Caco-2 (cell line): ENCODE measurements at regions of chr2 and their contacts with region 1.

Region 1: DNA sequence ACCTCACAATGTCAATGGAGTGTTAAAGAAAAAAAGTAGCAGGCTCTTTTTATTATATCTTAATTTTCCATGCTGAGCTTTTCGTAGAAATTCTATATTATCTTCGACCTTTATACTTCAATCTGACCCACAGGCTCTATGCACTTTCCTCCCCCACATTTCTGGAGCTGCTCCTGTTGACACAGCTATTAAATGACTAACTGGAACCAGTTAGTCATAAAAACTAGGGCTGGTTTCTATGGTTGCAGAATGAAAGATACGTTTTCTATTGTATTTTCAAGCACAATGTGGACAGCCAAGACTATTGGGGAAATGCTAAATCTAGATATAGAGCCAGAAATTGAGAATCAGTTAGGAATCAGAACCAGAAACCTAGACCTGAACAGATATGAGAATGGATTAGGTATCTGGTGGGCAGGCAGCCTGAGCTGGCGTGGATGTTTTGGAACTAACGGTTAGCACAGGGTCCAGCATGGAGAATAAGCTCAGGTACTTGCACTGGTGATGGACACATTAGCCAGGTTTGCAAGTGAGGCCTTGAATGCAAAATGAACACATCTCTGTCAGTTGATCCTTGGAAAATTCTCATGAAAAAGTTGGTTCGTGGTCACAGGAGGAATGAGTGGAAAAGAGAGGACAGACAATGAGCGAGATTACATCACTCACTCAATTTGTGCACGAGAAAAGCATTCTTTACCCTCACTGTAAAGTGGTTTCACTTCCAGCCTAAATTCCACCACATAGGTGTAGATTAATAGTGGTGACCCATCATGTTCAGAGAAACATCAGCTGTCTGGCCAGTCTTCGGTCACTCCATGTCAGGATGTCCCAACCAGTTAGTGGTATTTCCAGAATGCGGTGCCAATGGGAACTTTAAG is 144.6 kb upstream of the EPHA4 start:
- DNase-seq: peak; percentile 71 to 82
- H3K4me3 ChIP-seq: no peak overlapping the region
- H3K4me3 Mint-ChIP-seq: peak overlapping the region; percentile 57
- H3K27ac Mint-ChIP-seq: peak overlapping the region; percentile 93
- H3K4me1 ChIP-seq: peaks cover 47% of the 10 kb centered on the region
- H3K4me1 Mint-ChIP-seq: peaks cover 55% of the 10 kb centered on the region
- H3K27me3 ChIP-seq: no peaks in the 10 kb centered on the region
- H3K27me3 Mint-ChIP-seq: no peaks in the 10 kb centered on the region
- CTCF ChIP-seq: no peak

Region 2: GRCh38 chr2:220880623-220881596 is 835.8 kb before region 1 on chr2:
- CTCF ChIA-PET with region 1: no interaction called
- POLR2A ChIA-PET with region 1: no interaction called
- intact Hi-C with region 1: no loop called
- DNase-seq: no peak
- H3K4me3 ChIP-seq: no peak overlapping the region
- H3K4me3 Mint-ChIP-seq: no peak overlapping the region
- H3K27ac Mint-ChIP-seq: no peak overlapping the region
- H3K4me1 ChIP-seq: no peaks in the 10 kb centered on the region
- H3K4me1 Mint-ChIP-seq: no peaks in the 10 kb centered on the region
- H3K27me3 ChIP-seq: peaks cover 2% of the 10 kb centered on the region
- H3K27me3 Mint-ChIP-seq: peaks cover 3% of the 10 kb centered on the region
- CTCF ChIP-seq: no peak

Region 3: DNA sequence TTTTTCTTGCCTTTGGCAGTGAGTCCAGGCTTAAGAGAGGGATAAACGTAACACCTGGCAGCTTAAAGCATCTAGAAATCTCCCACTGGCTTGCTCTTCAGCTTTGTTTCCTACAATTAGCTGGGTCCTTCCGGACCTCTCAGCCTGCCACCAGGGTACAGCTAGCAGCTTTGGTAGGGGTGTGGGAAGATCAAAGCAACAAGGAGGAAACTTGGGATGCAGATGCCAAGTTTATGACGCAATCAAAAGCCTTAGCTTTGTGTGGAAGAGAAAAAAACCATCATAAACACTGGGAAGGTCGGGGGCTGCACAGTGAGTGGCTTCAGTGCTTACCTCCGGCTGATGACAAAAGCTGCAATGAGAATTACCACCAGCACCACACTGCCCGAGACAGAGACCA is 261.5 kb before region 1 on chr2:
- CTCF ChIA-PET with region 1: no interaction called
- POLR2A ChIA-PET with region 1: no interaction called
- intact Hi-C with region 1: loop called (anchors 10 kb)
- DNase-seq: no peak
- H3K4me3 ChIP-seq: no peak overlapping the region
- H3K4me3 Mint-ChIP-seq: no peak overlapping the region
- H3K27ac Mint-ChIP-seq: no peak overlapping the region
- H3K4me1 ChIP-seq: no peaks in the 10 kb centered on the region
- H3K4me1 Mint-ChIP-seq: no peaks in the 10 kb centered on the region
- H3K27me3 ChIP-seq: no peaks in the 10 kb centered on the region
- H3K27me3 Mint-ChIP-seq: no peaks in the 10 kb centered on the region
- CTCF ChIP-seq: no peak

Region 4: DNA sequence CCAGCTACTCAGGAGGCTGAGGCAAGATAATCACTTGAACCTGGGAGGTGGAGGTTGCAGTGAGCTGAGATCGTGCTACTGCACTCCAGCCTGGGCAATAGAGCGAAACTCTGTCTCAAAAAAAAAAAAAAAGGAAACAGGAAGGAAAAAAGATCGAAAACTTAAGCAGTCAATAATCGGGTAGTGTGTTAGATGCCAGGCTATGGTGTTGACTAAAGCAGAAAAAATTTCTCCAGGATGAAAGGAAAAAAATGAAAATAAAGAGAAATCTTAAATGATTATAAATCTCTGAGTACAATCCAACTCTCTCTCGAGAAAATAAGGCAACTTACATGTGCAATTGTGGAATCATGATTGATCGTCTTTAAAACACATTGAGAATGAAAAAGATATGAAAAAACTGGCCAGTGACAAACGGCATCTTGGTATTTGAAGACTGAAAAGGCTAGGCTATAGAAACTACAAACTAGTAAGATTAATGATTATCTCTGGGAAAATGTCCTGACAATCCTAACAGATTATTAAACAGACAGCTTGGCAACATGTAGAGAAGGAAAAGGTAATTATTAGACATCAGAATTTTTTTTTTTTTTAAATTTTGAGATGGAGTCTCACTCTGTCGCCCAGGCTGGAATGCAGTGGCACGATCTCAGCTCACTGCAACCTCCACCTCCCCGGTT is 128.2 kb before region 1 on chr2:
- CTCF ChIA-PET with region 1: no interaction called
- POLR2A ChIA-PET with region 1: no interaction called
- intact Hi-C with region 1: loop called (anchors 2 kb)
- DNase-seq: no peak
- H3K4me3 ChIP-seq: no peak overlapping the region
- H3K4me3 Mint-ChIP-seq: peak overlapping the region; percentile 13
- H3K27ac Mint-ChIP-seq: peak overlapping the region; percentile 80
- H3K4me1 ChIP-seq: peaks cover 50% of the 10 kb centered on the region
- H3K4me1 Mint-ChIP-seq: peaks cover 38% of the 10 kb centered on the region
- H3K27me3 ChIP-seq: no peaks in the 10 kb centered on the region
- H3K27me3 Mint-ChIP-seq: no peaks in the 10 kb centered on the region
- CTCF ChIP-seq: no peak

Region 5: DNA sequence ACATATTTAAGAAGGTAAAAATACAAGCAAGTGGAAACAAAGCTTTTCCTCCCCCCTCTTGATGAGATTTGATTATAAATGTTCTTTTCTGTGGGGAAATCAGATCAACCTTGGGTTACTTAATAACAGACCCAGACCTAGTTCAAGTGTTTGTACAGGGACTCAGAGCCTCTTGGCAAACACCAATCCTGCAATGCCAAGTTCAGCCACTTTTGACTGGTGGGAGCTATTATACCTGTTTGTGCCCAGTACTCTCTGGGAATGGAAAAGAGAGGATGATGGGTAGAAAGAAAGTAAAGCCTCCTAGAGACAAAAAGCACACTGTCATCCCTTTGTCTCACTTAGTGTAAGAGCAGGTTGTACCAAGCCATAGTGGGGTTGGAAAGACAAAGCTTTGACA is 80.7 kb before region 1 on chr2:
- CTCF ChIA-PET with region 1: no interaction called
- POLR2A ChIA-PET with region 1: no interaction called
- intact Hi-C with region 1: loop called (anchors 5 kb)
- DNase-seq: peak in 1 of 2 experiments; percentile 31
- H3K4me3 ChIP-seq: no peak overlapping the region
- H3K4me3 Mint-ChIP-seq: no peak overlapping the region
- H3K27ac Mint-ChIP-seq: no peak overlapping the region
- H3K4me1 ChIP-seq: no peaks in the 10 kb centered on the region
- H3K4me1 Mint-ChIP-seq: no peaks in the 10 kb centered on the region
- H3K27me3 ChIP-seq: no peaks in the 10 kb centered on the region
- H3K27me3 Mint-ChIP-seq: no peaks in the 10 kb centered on the region
- CTCF ChIP-seq: peak; percentile 28 to 38

Region 6: GRCh38 chr2:221731443-221732145 is 14.9 kb after region 1 on chr2:
- CTCF ChIA-PET with region 1: no interaction called
- POLR2A ChIA-PET with region 1: no interaction called
- intact Hi-C with region 1: loop called (anchors 1 kb)
- DNase-seq: peak; percentile 83 to 90
- H3K4me3 ChIP-seq: no peak overlapping the region
- H3K4me3 Mint-ChIP-seq: peak overlapping the region; percentile 48
- H3K27ac Mint-ChIP-seq: peak overlapping the region; percentile 89
- H3K4me1 ChIP-seq: peaks cover 26% of the 10 kb centered on the region
- H3K4me1 Mint-ChIP-seq: peaks cover 23% of the 10 kb centered on the region
- H3K27me3 ChIP-seq: no peaks in the 10 kb centered on the region
- H3K27me3 Mint-ChIP-seq: no peaks in the 10 kb centered on the region
- CTCF ChIP-seq: no peak